ENCODE measurements at regions of chr18 and their contacts with region 1.

Region 1: DNA sequence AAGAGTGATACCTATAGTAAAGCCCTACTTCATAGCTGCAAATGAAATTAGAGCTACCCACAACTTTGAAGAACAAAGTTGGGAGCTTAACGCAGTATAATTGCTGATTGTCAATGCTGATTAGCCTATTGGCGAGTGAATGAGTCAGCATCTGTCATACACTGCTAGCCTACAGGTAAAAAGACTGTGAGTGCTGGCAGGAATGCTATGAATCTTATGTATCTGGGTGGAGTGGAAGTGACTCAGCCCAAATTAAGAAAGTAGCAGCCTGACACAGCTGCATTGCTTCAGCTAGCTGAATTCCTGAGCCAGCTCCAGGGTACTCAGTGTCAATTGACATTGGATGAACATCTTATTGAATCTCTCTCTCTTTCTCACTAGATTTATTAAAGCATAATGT is 179.3 kb upstream of the DCC start:
- DNase-seq: peak; percentile 88
- H3K4me3 Mint-ChIP-seq: no peak overlapping the region
- H3K27ac Mint-ChIP-seq: peak overlapping the region; percentile 7
- H3K4me1 Mint-ChIP-seq: peaks cover 18% of the 10 kb centered on the region
- H3K27me3 Mint-ChIP-seq: no peaks in the 10 kb centered on the region
- CTCF ChIP-seq: no peak

Region 2: DNA sequence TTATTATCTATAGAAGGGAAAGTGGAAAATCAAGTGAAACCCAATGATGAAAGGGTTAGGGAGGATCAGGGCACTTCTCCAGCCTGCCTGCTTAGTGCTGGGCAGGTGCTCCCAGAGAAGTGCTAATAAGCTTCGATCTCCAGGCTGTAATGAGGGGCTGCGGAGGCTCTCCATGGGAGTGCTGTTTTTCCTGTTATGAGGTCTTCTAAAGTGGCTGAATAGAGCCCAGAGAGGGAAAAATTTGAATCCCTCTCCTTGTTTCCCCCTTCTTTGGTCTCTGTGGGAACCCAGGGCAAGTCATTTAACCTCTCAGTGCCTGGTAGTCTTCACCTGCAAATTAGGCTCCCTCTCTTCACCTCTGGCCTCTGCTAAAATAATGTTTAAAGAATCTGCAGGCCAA is 172.4 kb before region 1 on chr18:
- CTCF ChIA-PET with region 1: no interaction called
- POLR2A ChIA-PET with region 1: no interaction called
- intact Hi-C with region 1: no loop called
- DNase-seq: no peak
- H3K4me3 Mint-ChIP-seq: no peak overlapping the region
- H3K27ac Mint-ChIP-seq: no peak overlapping the region
- H3K4me1 Mint-ChIP-seq: no peaks in the 10 kb centered on the region
- H3K27me3 Mint-ChIP-seq: no peaks in the 10 kb centered on the region
- CTCF ChIP-seq: no peak

Region 3: DNA sequence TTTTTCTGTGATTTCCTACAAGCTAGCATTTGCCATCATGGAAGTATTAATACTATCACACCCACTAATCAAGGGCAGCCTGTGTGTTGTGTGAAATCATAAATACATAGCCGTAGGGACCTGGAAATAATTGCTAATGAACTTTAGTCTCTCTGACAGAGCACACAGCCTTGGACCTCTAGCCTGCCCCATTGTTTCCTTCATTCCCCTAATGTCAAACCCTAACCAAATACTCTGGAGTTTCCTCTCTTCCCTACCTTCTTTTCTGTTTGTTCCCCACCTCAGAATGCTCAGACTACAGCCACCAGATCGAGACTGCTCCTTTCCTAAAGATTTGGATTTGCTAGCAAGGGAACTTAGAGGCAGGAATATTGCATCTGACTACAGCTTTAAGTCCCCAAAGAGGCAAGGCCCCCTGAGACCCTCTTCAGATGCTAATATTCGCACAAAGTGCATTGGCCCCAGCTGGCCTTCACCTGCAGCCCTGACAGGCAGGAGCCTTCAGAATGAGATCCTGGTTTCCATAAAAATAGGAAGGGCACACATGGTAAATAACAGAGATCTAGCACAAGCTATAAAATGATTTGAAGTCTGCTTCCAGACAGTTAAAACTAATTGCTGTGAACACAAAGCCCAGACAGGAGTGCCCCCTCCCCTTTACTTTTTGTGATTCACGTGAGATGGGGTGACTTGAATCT is 99.9 kb before region 1 on chr18:
- CTCF ChIA-PET with region 1: no interaction called
- POLR2A ChIA-PET with region 1: no interaction called
- intact Hi-C with region 1: no loop called
- DNase-seq: no peak
- H3K4me3 Mint-ChIP-seq: no peak overlapping the region
- H3K27ac Mint-ChIP-seq: no peak overlapping the region
- H3K4me1 Mint-ChIP-seq: no peaks in the 10 kb centered on the region
- H3K27me3 Mint-ChIP-seq: no peaks in the 10 kb centered on the region
- CTCF ChIP-seq: no peak

Region 4: GRCh38 chr18:52150050-52150449 is 10.6 kb before region 1 on chr18:
- CTCF ChIA-PET with region 1: interaction called, 4 read pairs
- POLR2A ChIA-PET with region 1: interaction called, 17 read pairs
- intact Hi-C with region 1: no loop called
- DNase-seq: peak; percentile 45
- H3K4me3 Mint-ChIP-seq: no peak overlapping the region
- H3K27ac Mint-ChIP-seq: peak overlapping the region; percentile 55
- H3K4me1 Mint-ChIP-seq: peaks cover 19% of the 10 kb centered on the region
- H3K27me3 Mint-ChIP-seq: no peaks in the 10 kb centered on the region
- CTCF ChIP-seq: no peak

Region 5: GRCh38 chr18:52219102-52219501 is 58.5 kb after region 1 on chr18:
- CTCF ChIA-PET with region 1: no interaction called
- POLR2A ChIA-PET with region 1: no interaction called
- intact Hi-C with region 1: no loop called
- DNase-seq: no peak
- H3K4me3 Mint-ChIP-seq: no peak overlapping the region
- H3K27ac Mint-ChIP-seq: peak overlapping the region; percentile 47
- H3K4me1 Mint-ChIP-seq: peaks cover 6% of the 10 kb centered on the region
- H3K27me3 Mint-ChIP-seq: no peaks in the 10 kb centered on the region
- CTCF ChIP-seq: no peak

Region 6: DNA sequence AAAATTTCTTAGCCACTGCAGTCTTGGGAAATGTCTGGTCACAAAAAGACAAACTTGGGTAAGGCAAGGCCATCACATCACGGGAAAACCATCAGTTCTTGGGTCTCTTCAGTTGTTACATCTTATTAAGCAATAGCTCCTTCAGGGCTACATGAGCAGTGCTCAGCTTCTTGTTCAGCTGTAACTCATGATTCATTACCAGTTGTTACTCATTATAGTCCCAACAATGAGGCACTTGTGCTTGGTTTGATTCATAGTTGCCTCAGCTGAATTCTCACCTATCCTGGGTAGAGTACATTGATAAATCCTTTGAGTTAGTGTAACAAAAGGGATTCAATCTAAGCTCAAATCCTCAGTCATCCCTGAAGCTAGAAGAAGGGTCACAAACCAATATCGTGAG is 76.9 kb after region 1 on chr18:
- CTCF ChIA-PET with region 1: no interaction called
- POLR2A ChIA-PET with region 1: interaction called, 6 read pairs
- intact Hi-C with region 1: loop called (anchors 5 kb)
- DNase-seq: peak; percentile 56
- H3K4me3 Mint-ChIP-seq: no peak overlapping the region
- H3K27ac Mint-ChIP-seq: no peak overlapping the region
- H3K4me1 Mint-ChIP-seq: peaks cover 6% of the 10 kb centered on the region
- H3K27me3 Mint-ChIP-seq: no peaks in the 10 kb centered on the region
- CTCF ChIP-seq: no peak